Posterior vena cava (tissue), 2 donors: ENCODE measurements at regions of chr18 and their contacts with region 1.

Region 1: DNA sequence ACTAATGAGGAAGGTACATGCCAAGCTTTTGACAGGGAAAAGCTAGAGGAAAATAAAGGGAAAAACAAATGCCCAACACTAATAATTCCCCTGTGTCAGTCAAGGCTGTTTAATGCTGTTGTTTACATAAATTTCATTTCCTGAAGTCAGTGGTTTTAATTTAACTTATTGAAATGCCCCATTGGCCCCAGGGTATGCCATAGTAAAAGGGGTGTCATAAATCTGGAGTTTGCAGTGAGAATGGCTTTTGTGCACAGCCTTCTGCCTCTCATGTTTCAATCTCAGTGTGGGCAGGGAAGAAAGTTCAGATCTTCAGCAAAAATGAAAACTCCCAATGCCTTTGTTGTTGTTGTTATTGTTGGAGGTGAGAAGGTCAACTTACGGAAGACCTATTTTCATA is 550.1 kb upstream of the DCC start:
- DNase-seq: no peak

Region 2: GRCh38 chr18:52190631-52191030 is 400.8 kb after region 1 on chr18:
- intact Hi-C with region 1: loop called in 1 of 2 experiments (anchors 10 kb)
- DNase-seq: no peak